ENCODE measurements at regions of chr3 and their contacts with region 1.

Region 1: GRCh38 chr3:42547401-42547945 is 34.3 kb downstream of the SEC22C start:
- DNase-seq: peak; percentile 56
- H3K4me3 Mint-ChIP-seq: no peak overlapping the region
- H3K27ac Mint-ChIP-seq: no peak overlapping the region
- H3K4me1 Mint-ChIP-seq: no peaks in the 10 kb centered on the region
- H3K27me3 Mint-ChIP-seq: no peaks in the 10 kb centered on the region
- CTCF ChIP-seq: peak; percentile 93

Region 2: DNA sequence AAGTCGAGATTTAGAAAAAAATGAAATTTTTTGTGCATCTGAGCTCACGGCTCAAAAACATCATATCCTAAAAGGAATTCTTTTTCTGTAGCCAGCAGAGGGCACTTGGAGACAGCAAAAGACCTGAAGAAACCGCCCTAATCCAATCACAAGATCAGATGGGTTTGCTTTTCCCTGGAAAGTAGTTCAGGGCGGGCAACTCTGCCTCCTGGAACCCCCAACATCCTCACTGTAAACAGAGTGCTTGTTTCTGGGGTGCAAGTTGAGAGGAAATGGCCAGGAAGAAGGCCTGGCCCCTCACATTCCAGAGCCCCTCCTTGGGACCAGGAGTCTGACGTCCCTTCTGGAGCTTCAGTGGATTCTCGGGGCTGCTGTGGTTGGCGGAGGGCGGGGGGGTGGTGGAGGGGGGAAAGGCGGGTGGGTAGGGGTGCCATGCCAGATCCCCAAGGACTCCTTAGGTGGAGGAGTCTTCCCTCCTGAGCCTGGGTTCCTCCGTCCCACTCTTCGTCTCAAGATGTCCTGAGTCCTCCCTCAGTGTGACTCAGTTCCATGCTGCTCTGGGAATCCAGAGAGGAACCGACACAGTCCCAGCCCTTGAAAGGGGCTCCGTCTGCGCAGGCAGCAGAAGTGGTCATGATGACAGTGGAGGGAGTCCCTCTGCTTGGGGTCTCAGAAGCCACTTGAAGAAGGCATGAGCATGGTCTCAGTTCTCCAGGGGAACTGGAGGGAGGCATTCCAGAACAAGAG is 317.4 kb before region 1 on chr3:
- CTCF ChIA-PET with region 1: interaction called, 33 read pairs
- POLR2A ChIA-PET with region 1: no interaction called
- intact Hi-C with region 1: loop called (anchors 2 kb)
- DNase-seq: peak; percentile 50
- H3K4me3 Mint-ChIP-seq: no peak overlapping the region
- H3K27ac Mint-ChIP-seq: no peak overlapping the region
- H3K4me1 Mint-ChIP-seq: peaks cover 5% of the 10 kb centered on the region
- H3K27me3 Mint-ChIP-seq: peaks cover 13% of the 10 kb centered on the region
- CTCF ChIP-seq: peak; percentile 65

Region 3: GRCh38 chr3:42443819-42444436 is 103.5 kb before region 1 on chr3:
- CTCF ChIA-PET with region 1: interaction called, 3 read pairs
- POLR2A ChIA-PET with region 1: no interaction called
- intact Hi-C with region 1: loop called (anchors 1 kb)
- DNase-seq: peak; percentile 83
- H3K4me3 Mint-ChIP-seq: no peak overlapping the region
- H3K27ac Mint-ChIP-seq: no peak overlapping the region
- H3K4me1 Mint-ChIP-seq: no peaks in the 10 kb centered on the region
- H3K27me3 Mint-ChIP-seq: peaks cover 11% of the 10 kb centered on the region
- CTCF ChIP-seq: peak; percentile 97

Region 4: GRCh38 chr3:42533161-42533897 is 14.1 kb before region 1 on chr3:
- CTCF ChIA-PET with region 1: interaction called, 51 read pairs
- POLR2A ChIA-PET with region 1: no interaction called
- intact Hi-C with region 1: no loop called
- DNase-seq: no peak
- H3K4me3 Mint-ChIP-seq: no peak overlapping the region
- H3K27ac Mint-ChIP-seq: no peak overlapping the region
- H3K4me1 Mint-ChIP-seq: no peaks in the 10 kb centered on the region
- H3K27me3 Mint-ChIP-seq: no peaks in the 10 kb centered on the region
- CTCF ChIP-seq: no peak

Region 5: GRCh38 chr3:42572278-42572677 is 24.8 kb after region 1 on chr3:
- CTCF ChIA-PET with region 1: interaction called, 14 read pairs
- POLR2A ChIA-PET with region 1: no interaction called
- intact Hi-C with region 1: no loop called
- DNase-seq: peak; percentile 67
- H3K4me3 Mint-ChIP-seq: no peak overlapping the region
- H3K27ac Mint-ChIP-seq: no peak overlapping the region
- H3K4me1 Mint-ChIP-seq: no peaks in the 10 kb centered on the region
- H3K27me3 Mint-ChIP-seq: no peaks in the 10 kb centered on the region
- CTCF ChIP-seq: peak; percentile 28

Region 6: GRCh38 chr3:42880601-42881451 is 333.4 kb after region 1 on chr3:
- CTCF ChIA-PET with region 1: interaction called, 3 read pairs
- POLR2A ChIA-PET with region 1: interaction called, 3 read pairs
- intact Hi-C with region 1: loop called (anchors 5 kb)
- DNase-seq: peak; percentile 74
- H3K4me3 Mint-ChIP-seq: peak overlapping the region; percentile 63
- H3K27ac Mint-ChIP-seq: peak overlapping the region; percentile 21
- H3K4me1 Mint-ChIP-seq: peaks cover 6% of the 10 kb centered on the region
- H3K27me3 Mint-ChIP-seq: peaks cover 12% of the 10 kb centered on the region
- CTCF ChIP-seq: peak; percentile 88